Stomach (tissue), 19 donors: ENCODE measurements at regions of chr6 and their contacts with region 1.

Region 1: DNA sequence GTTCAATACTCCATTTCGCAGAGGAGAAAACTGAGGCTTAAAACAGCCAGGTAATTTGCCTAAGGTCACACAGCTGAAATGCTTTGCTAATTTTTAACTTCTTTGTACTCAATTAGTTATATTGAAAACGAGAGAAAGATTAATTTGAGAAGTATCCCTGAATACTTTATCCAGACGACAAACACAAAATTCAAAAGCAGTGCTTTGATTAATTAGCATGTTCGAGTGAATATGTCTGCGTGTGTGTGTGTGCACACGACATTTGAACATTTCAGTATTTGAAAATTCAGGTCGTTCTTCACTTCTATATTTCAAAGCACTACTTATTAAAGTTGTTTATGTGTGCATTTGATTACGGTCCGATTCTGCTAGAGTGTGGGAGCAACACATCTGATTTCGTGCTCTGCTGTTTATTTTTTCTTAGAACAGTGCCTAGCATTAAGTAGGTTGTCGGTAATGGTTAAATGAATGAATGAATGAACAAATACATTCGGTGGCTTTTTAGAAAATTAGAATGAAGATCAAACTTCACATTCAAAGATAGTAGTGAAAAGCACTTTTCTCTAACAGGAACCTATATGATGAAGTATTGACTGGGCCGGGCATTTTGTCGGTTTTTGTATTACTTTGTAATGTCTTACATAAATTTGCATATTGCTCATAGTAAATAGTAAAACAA is 36.9 kb upstream of the SYNCRIP start:
- DNase-seq: no peak
- H3K4me3 ChIP-seq: peak overlapping the region; percentile 69 to 85 (median 76)
- H3K27ac ChIP-seq: peak overlapping the region; percentile 86 to 96 (median 92)
- H3K4me1 ChIP-seq: peaks cover 18 to 40% (median 30%) of the 10 kb centered on the region in 4 donors
- H3K27me3 ChIP-seq: no peaks in the 10 kb centered on the region
- CTCF ChIP-seq: no peak
- EP300 ChIP-seq: no peak
- POLR2A ChIP-seq: no peak

Region 2: DNA sequence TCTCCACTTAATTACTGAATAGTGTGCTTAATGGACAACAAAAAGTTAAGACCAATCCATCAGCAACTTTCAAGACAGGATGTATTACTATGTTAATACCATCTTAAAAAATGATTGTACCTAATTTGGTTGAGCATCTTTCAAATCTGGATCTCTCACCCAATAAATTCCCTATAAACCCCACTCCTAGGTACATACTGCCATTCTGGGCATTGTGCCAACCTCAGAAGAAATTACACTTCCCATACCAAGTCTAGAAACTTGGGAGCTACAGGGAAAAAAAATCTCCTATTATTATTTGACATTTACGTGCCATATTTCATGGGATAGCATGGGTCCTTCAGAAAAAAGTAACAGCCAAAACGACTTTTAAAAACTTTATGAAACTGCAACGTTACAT is 42.0 kb before region 1 on chr6:
- intact Hi-C with region 1: loop called (anchors 5 kb)
- DNase-seq: no peak
- H3K4me3 ChIP-seq: no peak overlapping the region
- H3K27ac ChIP-seq: no peak overlapping the region
- H3K4me1 ChIP-seq: peaks cover 22 to 78% (median 52%) of the 10 kb centered on the region in 4 donors
- H3K27me3 ChIP-seq: no peaks in the 10 kb centered on the region
- CTCF ChIP-seq: no peak
- EP300 ChIP-seq: no peak
- POLR2A ChIP-seq: no peak